Activated CD4-positive, alpha-beta memory T cell treated with anti-CD3 and anti-CD28 coated beads, Interleukin-2, amount 10 ng/mL, durations not matched to agents 7 days and 5 days (primary cell): ENCODE measurements at regions of chr2 and their contacts with region 1.

Region 1: DNA sequence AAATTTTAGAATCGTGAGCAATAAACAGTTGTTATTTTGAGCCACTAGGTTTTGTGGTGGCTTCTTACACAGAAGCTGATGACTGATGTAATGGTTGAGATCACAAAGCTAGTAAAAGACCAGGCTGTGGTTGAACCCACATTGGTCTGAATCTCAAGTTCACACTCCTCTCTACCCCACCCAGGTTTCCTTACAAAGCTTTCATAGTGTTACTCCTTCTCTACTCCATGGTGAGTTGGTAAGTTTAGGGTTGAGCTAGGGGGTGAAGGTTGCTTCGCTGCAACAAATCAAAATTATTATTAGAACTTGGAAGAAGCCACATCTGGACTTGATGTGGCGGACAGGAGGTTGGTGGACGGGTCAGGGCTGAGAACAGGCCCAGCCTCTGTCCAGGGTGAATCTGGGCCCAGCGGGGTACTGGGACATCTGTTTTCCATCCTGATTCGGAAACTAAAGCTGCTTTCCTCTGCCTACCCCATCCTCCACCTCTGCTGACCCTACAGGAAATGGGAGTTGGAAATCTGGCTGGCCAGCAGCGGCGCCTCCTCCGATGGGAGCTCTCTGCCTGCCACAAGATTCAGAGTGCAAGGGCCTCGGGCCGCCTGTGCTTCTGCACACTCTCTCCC is 86.3 kb downstream of the ZFP36L2 start:
- DNase-seq: peak; percentile 59
- H3K4me3 Mint-ChIP-seq: peak overlapping the region; percentile 61
- H3K27ac Mint-ChIP-seq: peak overlapping the region; percentile 92
- H3K4me1 Mint-ChIP-seq: peaks cover 71% of the 10 kb centered on the region
- H3K27me3 Mint-ChIP-seq: no peaks in the 10 kb centered on the region

Region 2: DNA sequence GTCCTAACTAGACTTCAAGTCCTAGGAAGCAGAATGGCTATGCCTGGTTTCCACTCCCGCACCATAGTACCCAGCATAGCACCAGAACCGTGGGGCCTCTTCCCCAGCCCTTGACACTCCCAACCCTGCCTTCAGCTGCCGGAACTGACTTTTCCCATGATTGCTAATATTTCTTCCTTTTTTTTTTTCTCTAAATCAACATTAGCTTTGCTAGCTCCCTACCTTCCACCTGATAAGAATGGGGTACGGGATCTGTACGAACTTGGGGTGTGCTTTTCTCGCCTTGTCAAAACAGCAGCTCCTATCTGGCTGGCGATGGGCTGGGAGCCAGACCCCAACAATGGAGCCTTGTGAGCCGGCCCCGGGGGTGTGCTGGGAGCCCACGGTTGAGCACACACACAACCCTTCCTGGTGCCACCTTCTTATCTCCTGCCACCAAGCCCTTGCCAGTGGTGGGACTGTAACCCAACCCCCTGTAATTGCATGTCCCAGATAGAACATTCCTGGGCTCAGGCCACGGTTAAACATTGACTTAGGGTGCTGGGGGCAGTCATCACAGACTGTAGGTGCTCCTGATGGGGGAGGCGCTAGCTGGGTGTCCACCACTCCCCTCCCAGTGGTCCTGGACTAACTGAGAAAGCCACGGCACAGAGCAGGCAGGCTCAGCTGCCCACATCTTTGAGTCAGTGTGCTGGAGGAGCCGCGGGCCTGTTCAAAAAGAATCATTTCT is 134.7 kb before region 1 on chr2:
- CTCF ChIA-PET with region 1: no interaction called
- POLR2A ChIA-PET with region 1: no interaction called
- DNase-seq: no peak
- H3K4me3 Mint-ChIP-seq: no peak overlapping the region
- H3K27ac Mint-ChIP-seq: no peak overlapping the region
- H3K4me1 Mint-ChIP-seq: no peaks in the 10 kb centered on the region
- H3K27me3 Mint-ChIP-seq: no peaks in the 10 kb centered on the region

Region 3: DNA sequence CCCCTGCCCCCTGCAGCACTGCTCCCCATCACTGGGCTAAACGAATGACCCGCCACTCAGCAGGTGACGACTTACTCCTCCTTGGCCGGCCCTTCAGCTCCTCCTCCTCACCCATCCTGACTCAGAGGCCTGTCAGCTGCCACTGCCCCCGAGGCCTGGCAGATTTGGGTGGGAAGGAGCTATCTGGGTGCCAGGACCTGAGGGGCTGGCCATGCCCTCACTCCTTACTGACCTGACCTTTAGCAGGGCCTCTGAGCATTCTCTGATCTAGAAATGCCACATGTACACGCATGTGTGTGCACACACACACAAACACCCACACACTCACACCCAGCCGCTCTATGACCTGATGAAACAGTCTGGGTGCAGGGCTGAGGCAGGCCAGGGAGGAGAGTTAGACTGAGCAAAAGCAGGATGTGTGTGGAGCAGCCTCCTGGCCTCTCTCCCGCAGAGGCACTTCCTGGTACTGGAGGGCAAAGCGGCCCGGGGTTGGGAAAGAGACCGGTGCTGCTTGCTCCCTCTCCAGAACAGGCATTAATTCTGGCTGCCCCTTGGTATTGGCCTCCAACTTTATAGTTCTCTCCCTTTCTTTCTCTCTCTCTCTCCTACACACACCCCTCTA is 18.3 kb after region 1 on chr2:
- CTCF ChIA-PET with region 1: no interaction called
- POLR2A ChIA-PET with region 1: interaction called, 11 read pairs
- DNase-seq: peak; percentile 77
- H3K4me3 Mint-ChIP-seq: peak overlapping the region; percentile 71
- H3K27ac Mint-ChIP-seq: peak overlapping the region; percentile 98
- H3K4me1 Mint-ChIP-seq: peaks cover 61% of the 10 kb centered on the region
- H3K27me3 Mint-ChIP-seq: no peaks in the 10 kb centered on the region

Region 4: DNA sequence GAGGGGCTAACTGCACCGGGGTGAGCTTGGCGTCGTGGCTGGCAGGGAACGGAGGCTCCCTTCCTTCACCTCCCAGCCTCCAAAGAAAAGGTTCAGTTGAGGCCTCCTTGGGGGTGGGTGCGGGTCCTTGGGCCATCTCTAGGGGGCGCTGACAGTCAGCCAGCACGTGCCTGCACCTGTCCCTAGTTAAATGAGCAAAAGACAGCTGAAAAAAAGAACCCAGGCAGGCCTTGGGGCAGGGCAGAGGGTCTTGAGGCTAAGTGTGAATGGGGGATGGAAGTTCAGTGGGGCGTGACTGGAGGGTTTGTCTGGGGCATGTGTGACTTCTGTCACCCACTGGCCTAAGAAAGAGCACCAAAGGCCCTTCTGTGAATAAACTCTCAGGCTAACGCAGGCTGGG is 29.9 kb after region 1 on chr2:
- CTCF ChIA-PET with region 1: interaction called, 11 read pairs
- POLR2A ChIA-PET with region 1: interaction called, 154 read pairs
- DNase-seq: peak; percentile 77
- H3K4me3 Mint-ChIP-seq: no peak overlapping the region
- H3K27ac Mint-ChIP-seq: peak overlapping the region; percentile 94
- H3K4me1 Mint-ChIP-seq: peaks cover 68% of the 10 kb centered on the region
- H3K27me3 Mint-ChIP-seq: no peaks in the 10 kb centered on the region

Region 5: GRCh38 chr2:43178602-43179542 is 38.8 kb after region 1 on chr2:
- CTCF ChIA-PET with region 1: interaction called, 11 read pairs
- POLR2A ChIA-PET with region 1: interaction called, 154 read pairs
- DNase-seq: peak; percentile 43
- H3K4me3 Mint-ChIP-seq: no peak overlapping the region
- H3K27ac Mint-ChIP-seq: peak overlapping the region; percentile 87
- H3K4me1 Mint-ChIP-seq: peaks cover 69% of the 10 kb centered on the region
- H3K27me3 Mint-ChIP-seq: no peaks in the 10 kb centered on the region

Region 6: GRCh38 chr2:43194121-43194869 is 54.2 kb after region 1 on chr2:
- CTCF ChIA-PET with region 1: interaction called, 4 read pairs
- POLR2A ChIA-PET with region 1: interaction called, 24 read pairs
- DNase-seq: no peak
- H3K4me3 Mint-ChIP-seq: peak overlapping the region; percentile 72
- H3K27ac Mint-ChIP-seq: peak overlapping the region; percentile 94
- H3K4me1 Mint-ChIP-seq: peaks cover 54% of the 10 kb centered on the region
- H3K27me3 Mint-ChIP-seq: no peaks in the 10 kb centered on the region

Region 7: DNA sequence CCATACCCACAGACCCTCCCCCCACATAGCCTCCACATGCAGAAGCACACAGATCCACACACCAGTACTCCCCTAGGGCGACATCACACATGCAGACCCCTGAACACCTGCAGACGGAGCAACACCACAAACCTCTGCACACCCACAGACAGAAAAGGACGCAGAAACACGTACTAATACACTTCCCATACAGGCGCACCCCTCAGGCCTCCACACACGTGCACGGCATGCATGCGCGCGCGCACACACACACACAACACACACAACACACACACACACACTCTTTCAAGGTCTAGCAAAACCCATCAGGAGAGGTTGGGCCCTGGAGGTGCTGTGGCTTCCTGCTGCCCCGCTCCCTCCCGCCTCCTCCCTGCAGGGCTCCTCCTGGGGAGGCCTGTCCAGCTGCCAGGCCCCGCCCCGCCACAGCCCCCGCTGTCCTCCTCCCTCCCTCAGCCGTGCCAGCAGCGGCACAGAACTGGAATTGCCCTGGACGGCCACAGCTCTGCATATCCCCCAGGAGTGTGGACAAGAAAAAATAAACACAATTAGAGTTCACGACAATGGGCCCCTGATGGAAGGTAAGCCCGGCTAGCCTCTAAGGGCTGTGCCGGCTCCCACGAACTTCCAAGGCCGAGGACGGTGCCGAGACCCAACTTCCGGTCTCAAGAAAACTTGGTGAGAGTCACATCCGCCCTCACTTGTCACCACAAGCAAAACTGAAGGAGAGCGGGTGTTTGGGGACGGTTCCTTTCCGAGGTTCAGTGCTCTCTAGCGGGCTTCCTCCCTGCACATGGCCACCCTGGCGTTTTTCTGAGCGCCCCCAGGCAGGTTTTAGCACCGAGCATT is 79.5 kb after region 1 on chr2:
- CTCF ChIA-PET with region 1: interaction called, 172 read pairs
- POLR2A ChIA-PET with region 1: interaction called, 1,053 read pairs
- DNase-seq: peak; percentile 88
- H3K4me3 Mint-ChIP-seq: peak overlapping the region; percentile 95
- H3K27ac Mint-ChIP-seq: peak overlapping the region; percentile 98
- H3K4me1 Mint-ChIP-seq: peaks cover 48% of the 10 kb centered on the region
- H3K27me3 Mint-ChIP-seq: no peaks in the 10 kb centered on the region